ENCODE measurements at regions of chr3 and their contacts with region 1.

Region 1: GRCh38 chr3:128680602-128681368 is 30.2 kb upstream of the RPN1 start:
- DNase-seq: peak; percentile 91 to 98
- ATAC-seq: peak; percentile 98 to 99
- H3K4me3 ChIP-seq: peak overlapping the region; percentile 54
- H3K27ac ChIP-seq: peak overlapping the region; percentile 97 to 98
- H3K4me1 ChIP-seq: 0 out of 3 replicates have a peak, but pooled peaks cover 5% of the 10 kb centered on the region
- CTCF ChIP-seq: peak; percentile 88
- EP300 ChIP-seq: no peak
- POLR2A ChIP-seq: no peak; the same call in none of the 2 replicates
- RAD21 ChIP-seq: peak; percentile 62 to 78

Region 2: GRCh38 chr3:128617557-128618397 is 63.0 kb before region 1 on chr3:
- CTCF ChIA-PET with region 1: interaction called, 10 read pairs
- POLR2A ChIA-PET with region 1: interaction called, 6 read pairs
- DNase-seq: peak; percentile 90 to 94
- ATAC-seq: peak; percentile 80 to 92
- H3K4me3 ChIP-seq: peak overlapping the region; percentile 57
- H3K27ac ChIP-seq: peak overlapping the region; percentile 77 to 93
- H3K4me1 ChIP-seq: peaks cover 15% of the 10 kb centered on the region
- CTCF ChIP-seq: peak; percentile 72
- EP300 ChIP-seq: no peak
- POLR2A ChIP-seq: no peak
- RAD21 ChIP-seq: peak; percentile 52 to 55

Region 3: DNA sequence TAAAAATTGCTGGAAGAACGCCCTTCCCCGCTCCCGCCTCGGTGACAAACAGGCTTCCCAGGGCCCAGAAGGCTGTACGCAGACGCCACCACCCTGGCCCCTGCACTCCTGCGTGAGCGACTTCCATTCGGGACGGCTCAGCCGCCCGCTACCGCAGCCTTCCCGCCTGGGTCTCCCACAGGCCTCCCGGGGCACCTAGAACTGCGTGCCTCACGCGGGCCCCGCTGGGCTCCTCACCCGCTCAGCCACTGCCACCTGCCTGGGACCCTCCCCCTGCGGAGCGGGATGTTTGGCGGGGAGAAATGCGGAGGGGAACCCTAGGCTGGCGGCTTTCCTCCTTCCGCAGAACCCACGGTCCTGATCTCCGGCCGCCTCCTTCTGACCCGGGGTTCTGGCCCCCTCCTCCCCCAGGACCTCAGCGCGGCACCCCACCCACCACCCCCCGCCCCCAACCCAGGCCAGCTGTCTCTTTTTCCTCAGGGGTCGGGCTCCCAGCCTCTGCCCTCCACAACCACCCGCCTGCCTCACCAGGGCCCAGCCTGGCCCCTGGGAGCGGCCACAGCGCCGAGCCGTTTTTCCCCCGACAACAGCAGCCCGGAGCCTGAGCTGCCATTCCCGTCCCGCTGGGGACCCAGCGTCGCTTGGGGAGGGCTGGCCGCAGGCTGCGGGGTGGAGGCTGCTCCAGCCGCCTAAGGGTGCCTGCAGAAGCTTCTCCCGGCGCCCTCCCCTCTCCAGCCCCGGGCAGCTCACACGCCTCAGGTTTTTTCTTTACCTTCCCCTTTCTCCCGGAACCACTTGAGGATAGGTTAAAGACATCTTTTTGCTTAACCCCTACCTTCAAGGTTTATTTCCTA is 17.7 kb after region 1 on chr3:
- CTCF ChIA-PET with region 1: interaction called, 40 read pairs
- POLR2A ChIA-PET with region 1: interaction called, 11 read pairs
- DNase-seq: peak; percentile 47 to 52
- ATAC-seq: peak; percentile 91 to 96
- H3K4me3 ChIP-seq: peak overlapping the region; percentile 52
- H3K27ac ChIP-seq: peak overlapping the region; percentile 77 to 96
- H3K4me1 ChIP-seq: no peaks in the 10 kb centered on the region
- CTCF ChIP-seq: no peak
- EP300 ChIP-seq: no peak
- POLR2A ChIP-seq: no peak; the same call in 1 of the 2 replicates
- RAD21 ChIP-seq: no peak

Region 4: DNA sequence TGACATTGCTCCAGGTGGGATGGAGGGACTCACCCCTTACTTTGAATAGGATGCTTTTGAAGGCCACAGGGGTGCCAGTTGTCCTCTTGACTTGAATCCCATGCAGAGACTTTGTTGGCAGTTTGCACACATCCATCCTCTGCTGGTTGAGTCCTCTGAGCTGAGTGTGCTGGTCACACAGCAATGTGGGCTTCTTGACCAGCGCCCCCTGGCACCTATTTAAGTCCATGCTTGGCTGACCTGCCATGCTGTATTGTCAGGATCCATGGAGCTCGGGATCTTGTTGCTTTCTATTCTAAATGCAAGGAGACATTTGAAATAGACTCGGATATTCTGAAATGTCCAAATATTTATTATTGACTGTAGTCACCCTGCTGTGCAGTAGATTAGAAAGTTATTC is 65.0 kb after region 1 on chr3:
- CTCF ChIA-PET with region 1: interaction called, 11 read pairs
- POLR2A ChIA-PET with region 1: no interaction called
- DNase-seq: peak in 1 of 2 experiments; percentile 26
- ATAC-seq: peak; percentile 73 to 74; a peak in 5 of 6 replicates
- H3K4me3 ChIP-seq: no peak overlapping the region
- H3K27ac ChIP-seq: no peak overlapping the region
- H3K4me1 ChIP-seq: no peaks in the 10 kb centered on the region
- CTCF ChIP-seq: no peak
- EP300 ChIP-seq: no peak
- POLR2A ChIP-seq: no peak
- RAD21 ChIP-seq: no peak

Region 5: DNA sequence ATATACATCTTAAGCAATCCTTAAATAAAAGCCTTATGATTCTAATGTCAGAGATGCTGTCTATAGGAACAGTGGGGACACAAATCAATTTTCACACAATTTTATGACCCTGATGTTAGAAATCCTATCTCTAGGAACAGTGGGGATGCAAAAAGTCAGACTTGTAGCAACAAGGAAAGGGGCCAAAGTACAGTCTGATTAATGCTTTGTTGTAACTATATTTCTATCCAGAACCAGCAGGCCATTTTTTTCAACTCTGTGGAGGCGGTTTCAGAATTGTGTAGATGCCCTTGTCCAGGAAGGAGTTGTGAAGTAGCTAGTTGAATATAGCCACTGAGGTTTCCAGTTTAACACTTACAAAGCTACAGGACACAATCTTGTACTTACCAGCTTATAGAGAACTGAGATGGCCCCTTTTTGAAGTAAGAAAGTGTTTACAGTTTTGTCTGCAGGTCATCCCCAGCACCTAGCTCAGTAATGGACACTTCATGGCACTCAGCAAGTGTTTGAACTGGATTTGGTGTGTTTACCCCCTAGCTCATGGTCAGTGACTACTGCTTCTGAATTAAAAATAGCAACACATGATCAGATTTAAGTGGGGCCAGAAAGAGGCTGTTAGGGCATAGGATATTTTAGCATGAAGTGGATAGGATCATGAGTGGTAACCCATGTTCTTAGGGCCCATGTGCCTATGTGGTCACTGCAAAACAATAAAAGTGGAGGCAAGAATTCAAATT is 99.5 kb after region 1 on chr3:
- CTCF ChIA-PET with region 1: interaction called, 11 read pairs
- POLR2A ChIA-PET with region 1: no interaction called
- DNase-seq: no peak
- ATAC-seq: no peak
- H3K4me3 ChIP-seq: no peak overlapping the region
- H3K27ac ChIP-seq: no peak overlapping the region
- H3K4me1 ChIP-seq: peaks cover 44% of the 10 kb centered on the region
- CTCF ChIP-seq: no peak
- EP300 ChIP-seq: no peak
- POLR2A ChIP-seq: no peak
- RAD21 ChIP-seq: no peak

Region 6: DNA sequence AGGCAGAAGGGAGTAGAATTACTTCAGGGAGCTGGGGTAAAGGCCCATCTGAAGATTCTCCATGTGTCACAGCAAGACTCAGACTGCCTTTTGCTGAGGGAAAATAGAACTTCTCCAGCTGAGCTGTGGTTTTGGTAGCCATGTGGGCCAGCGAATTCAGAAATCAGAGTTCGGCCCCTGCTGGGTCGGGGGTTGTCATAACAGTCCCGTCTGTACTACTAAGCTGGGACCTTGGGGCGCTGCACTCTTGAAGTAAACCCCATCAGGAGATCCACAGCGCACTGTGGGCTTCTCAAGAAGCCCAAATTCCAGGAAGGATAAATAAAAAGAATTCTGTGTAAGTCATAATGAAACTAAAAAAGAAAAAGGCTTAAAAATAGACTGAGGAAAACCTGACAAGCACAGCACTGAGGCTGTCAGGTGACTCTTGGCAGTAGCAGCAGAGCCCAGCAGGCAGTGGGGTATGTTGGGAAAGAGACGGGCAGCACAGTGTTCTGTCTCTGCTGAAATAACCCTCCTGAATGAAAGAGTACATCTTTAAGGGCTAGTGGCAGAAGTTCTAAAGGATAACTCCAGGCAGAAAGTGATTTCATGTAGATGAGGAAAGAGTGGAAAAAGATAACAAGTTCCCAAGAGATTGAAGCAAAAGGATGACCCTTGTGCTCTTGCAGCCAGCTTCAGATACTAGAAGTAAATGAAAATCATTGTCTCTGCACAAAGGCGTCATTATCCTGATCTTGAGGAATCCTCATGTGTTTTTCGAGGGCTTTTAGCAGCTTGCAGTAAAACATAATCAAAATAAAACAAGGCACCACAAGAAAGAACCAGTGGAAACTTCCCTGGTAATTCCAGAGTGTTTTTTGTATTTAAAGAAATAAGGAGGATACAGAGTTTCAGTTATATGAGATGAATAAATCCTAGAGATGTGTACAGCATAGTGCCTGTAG is 119.7 kb after region 1 on chr3:
- CTCF ChIA-PET with region 1: interaction called, 57 read pairs
- POLR2A ChIA-PET with region 1: interaction called, 6 read pairs
- DNase-seq: no peak
- ATAC-seq: no peak
- H3K4me3 ChIP-seq: no peak overlapping the region
- H3K27ac ChIP-seq: no peak overlapping the region
- H3K4me1 ChIP-seq: peaks cover 8% of the 10 kb centered on the region
- CTCF ChIP-seq: no peak
- EP300 ChIP-seq: no peak
- POLR2A ChIP-seq: no peak
- RAD21 ChIP-seq: no peak

Region 7: GRCh38 chr3:128879125-128879969 is 198.6 kb after region 1 on chr3 and contains the start of gene ACAD9:
- CTCF ChIA-PET with region 1: interaction called, 9 read pairs
- POLR2A ChIA-PET with region 1: interaction called, 11 read pairs
- DNase-seq: peak; percentile 95 to 98
- ATAC-seq: peak; percentile 86 to 91
- H3K4me3 ChIP-seq: peak within 1 kb of the TSS; percentile 93
- H3K27ac ChIP-seq: peak within 1 kb of the TSS; percentile 96 to 97
- H3K4me1 ChIP-seq: peaks cover 21% of the 10 kb centered on the region; the same call in 2 of the 3 replicates
- CTCF ChIP-seq: no peak
- EP300 ChIP-seq: no peak
- POLR2A ChIP-seq: peak; percentile 56
- RAD21 ChIP-seq: no peak
- polyA plus RNA-seq, gene ACAD9: 24.1 and 26.1 TPM in 2 replicates

Measured in A549 (cell line).